SK-N-SH (cell line): ENCODE measurements at regions of chr1 and their contacts with region 1.

Region 1: DNA sequence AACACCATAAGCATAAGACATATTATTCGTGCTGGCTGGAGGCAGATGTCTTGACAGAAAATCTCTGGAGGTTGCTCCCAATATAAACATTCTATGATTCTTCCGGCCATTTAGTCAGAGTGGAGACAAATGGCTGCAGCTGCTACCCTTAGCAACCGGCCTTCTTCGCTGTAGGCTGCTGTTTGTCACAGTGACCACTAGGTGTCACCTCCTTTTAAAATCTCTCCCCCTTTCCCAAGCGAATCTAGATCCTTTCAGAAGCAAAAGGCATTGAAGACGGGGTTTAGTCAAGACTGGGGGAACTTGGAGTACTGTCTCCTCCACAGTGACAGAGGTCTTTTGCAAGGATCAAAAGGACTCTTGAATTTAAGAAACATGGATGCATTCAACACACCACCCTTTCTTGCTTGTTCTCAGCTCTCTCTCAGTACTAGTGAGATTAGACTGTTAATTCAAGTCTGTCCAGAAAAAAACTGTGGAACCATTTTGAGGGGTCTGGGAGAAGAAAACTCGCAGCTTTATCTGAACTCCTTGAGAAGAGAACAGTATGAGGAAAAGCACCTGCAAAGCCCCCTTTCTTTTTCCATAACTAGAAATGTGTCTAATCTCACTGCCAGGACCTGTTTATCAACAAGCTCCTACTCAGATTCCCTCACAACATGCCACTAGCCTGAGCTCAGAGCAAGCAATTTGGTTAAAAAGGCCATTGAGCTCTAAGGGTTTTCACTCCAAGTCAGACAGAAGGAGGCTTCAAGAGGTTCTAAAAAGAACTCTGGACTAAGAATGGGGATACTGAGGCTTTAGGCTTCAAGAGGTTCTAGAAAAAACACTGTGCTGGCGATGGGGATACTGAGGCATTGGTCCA is 408.3 kb upstream of the PLXNA2 start:
- DNase-seq: peak; percentile 80
- H3K4me3 ChIP-seq: no peak overlapping the region; a peak in 1 of 4 replicates
- H3K27ac ChIP-seq: peak overlapping the region in 1 of 2 experiments; percentile 73; a peak in 2 of 4 replicates
- H3K4me1 ChIP-seq: peaks cover 0 to 7% of the 10 kb centered on the region in 2 experiments; a peak in 2 of 4 replicates
- H3K27me3 ChIP-seq: no peaks in the 10 kb centered on the region
- CTCF ChIP-seq: peak; percentile 86
- EP300 ChIP-seq: 0 out of 4 replicates have a peak, but pooled peaks of 1 of the 2 experiments have one; percentile 24
- RAD21 ChIP-seq: peak; percentile 91

Region 2: DNA sequence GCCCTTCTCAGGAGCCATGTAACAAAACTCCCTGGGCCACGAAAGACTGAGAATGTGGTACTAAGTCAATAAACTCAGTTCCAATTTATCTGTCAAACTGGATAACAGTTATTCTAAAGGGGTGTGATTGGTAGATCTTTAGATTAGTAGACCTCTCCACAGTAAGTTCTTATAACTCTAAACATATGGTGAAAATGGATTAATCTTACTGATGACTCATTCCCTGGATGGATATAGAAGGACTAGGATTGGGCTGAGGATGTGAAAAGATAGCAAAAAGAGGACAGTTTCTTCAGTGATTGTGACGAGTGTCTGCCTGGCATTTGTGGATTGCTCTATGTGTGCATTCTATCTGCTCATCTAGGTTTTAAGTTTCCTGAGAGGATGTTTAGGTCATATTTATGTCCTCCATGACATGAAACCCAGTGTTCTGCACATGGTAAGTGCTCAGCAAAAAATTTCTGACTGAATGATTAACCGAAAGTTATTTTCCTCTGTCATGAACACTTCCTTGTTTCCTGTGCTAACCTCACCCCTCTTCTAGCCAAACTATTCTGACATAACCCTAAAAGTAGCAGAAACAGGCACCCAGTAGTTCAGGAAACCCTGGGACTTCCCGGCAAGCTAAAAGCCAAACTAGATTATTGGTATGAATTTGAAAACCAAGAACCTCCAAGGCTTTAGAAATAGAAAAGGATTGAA is 10.8 kb before region 1 on chr1:
- CTCF ChIA-PET with region 1: interaction called, 22 read pairs
- POLR2A ChIA-PET with region 1: no interaction called
- DNase-seq: no peak
- H3K4me3 ChIP-seq: no peak overlapping the region
- H3K27ac ChIP-seq: no peak overlapping the region; a peak in 1 of 4 replicates
- H3K4me1 ChIP-seq: peaks cover 0 to 22% of the 10 kb centered on the region in 2 experiments; a peak in 2 of 4 replicates
- H3K27me3 ChIP-seq: no peaks in the 10 kb centered on the region
- CTCF ChIP-seq: no peak
- EP300 ChIP-seq: no peak
- RAD21 ChIP-seq: no peak

Region 3: GRCh38 chr1:208668991-208669390 is 16.5 kb after region 1 on chr1:
- CTCF ChIA-PET with region 1: interaction called, 19 read pairs
- POLR2A ChIA-PET with region 1: no interaction called
- DNase-seq: no peak
- H3K4me3 ChIP-seq: no peak overlapping the region
- H3K27ac ChIP-seq: no peak overlapping the region
- H3K4me1 ChIP-seq: peaks cover 0 to 2% of the 10 kb centered on the region in 2 experiments; a peak in 1 of 4 replicates
- H3K27me3 ChIP-seq: no peaks in the 10 kb centered on the region
- CTCF ChIP-seq: no peak
- EP300 ChIP-seq: no peak
- RAD21 ChIP-seq: no peak

Region 4: GRCh38 chr1:208728815-208729214 is 76.3 kb after region 1 on chr1:
- CTCF ChIA-PET with region 1: interaction called, 11 read pairs
- POLR2A ChIA-PET with region 1: no interaction called
- DNase-seq: no peak
- H3K4me3 ChIP-seq: no peak overlapping the region
- H3K27ac ChIP-seq: peak overlapping the region in 1 of 2 experiments; percentile 82; a peak in 2 of 4 replicates
- H3K4me1 ChIP-seq: peaks cover 0 to 32% of the 10 kb centered on the region in 2 experiments; a peak in 2 of 4 replicates
- H3K27me3 ChIP-seq: no peaks in the 10 kb centered on the region
- CTCF ChIP-seq: no peak
- EP300 ChIP-seq: peak in 1 of 2 experiments; percentile 78; a peak in 2 of 4 replicates
- RAD21 ChIP-seq: peak; percentile 19

Region 5: DNA sequence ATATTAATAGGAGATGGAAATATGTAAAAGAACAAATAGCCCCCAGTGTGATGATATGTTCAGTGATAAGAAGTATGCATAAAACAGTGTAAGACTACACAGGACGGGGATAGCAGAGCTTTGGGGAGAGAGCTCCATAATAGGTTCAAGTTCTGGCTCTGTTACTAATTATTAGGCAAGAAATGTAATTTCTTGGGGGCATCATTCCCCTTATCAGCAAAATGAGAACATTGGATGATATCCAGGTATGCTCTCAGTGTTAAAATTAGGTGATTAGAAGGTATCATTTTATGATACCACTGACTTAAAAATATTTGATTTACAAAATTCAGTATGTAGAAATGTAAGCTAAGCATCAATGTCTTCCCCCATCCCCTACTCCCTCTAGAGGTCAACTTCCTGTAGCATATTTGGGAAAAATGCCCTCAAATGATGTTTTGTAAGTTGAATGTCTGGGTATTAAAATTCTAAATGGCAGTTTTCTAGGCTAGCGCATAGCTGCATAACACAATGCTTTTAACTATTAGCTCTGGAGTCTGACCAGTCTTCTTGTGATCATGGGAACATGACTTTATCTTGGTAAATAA is 345.3 kb after region 1 on chr1:
- CTCF ChIA-PET with region 1: interaction called, 18 read pairs
- POLR2A ChIA-PET with region 1: no interaction called
- DNase-seq: peak; percentile 53
- H3K4me3 ChIP-seq: no peak overlapping the region
- H3K27ac ChIP-seq: peak overlapping the region in 1 of 2 experiments; percentile 71; a peak in 2 of 4 replicates
- H3K4me1 ChIP-seq: peaks cover 0 to 11% of the 10 kb centered on the region in 2 experiments; a peak in 1 of 4 replicates
- H3K27me3 ChIP-seq: no peaks in the 10 kb centered on the region
- CTCF ChIP-seq: peak; percentile 67
- EP300 ChIP-seq: peak in 1 of 2 experiments; percentile 60; a peak in 1 of 4 replicates
- RAD21 ChIP-seq: peak; percentile 66

Region 6: GRCh38 chr1:209143916-209144315 is 491.4 kb after region 1 on chr1:
- CTCF ChIA-PET with region 1: no interaction called
- POLR2A ChIA-PET with region 1: no interaction called
- DNase-seq: no peak
- H3K4me3 ChIP-seq: no peak overlapping the region
- H3K27ac ChIP-seq: no peak overlapping the region
- H3K4me1 ChIP-seq: no peaks in the 10 kb centered on the region
- H3K27me3 ChIP-seq: no peaks in the 10 kb centered on the region
- CTCF ChIP-seq: no peak
- EP300 ChIP-seq: no peak
- RAD21 ChIP-seq: no peak

Region 7: GRCh38 chr1:209207701-209208286 is 555.3 kb after region 1 on chr1:
- CTCF ChIA-PET with region 1: interaction called, 36 read pairs
- POLR2A ChIA-PET with region 1: no interaction called
- DNase-seq: peak; percentile 87
- H3K4me3 ChIP-seq: peak overlapping the region; percentile 38 to 49
- H3K27ac ChIP-seq: peak overlapping the region in 1 of 2 experiments; percentile 71; a peak in 2 of 4 replicates
- H3K4me1 ChIP-seq: peaks cover 0 to 23% of the 10 kb centered on the region in 2 experiments; a peak in 3 of 4 replicates
- H3K27me3 ChIP-seq: no peaks in the 10 kb centered on the region
- CTCF ChIP-seq: peak; percentile 87
- EP300 ChIP-seq: no peak
- RAD21 ChIP-seq: peak; percentile 92